PC-9 (cell line): ENCODE measurements at regions of chr12 and their contacts with region 1.

Region 1: GRCh38 chr12:104276273-104277131 is 27.0 kb upstream of the EID3 start:
- DNase-seq: peak in 1 of 2 experiments; percentile 90
- H3K4me3 ChIP-seq: peak overlapping the region; percentile 59; the same call in 1 of the 2 replicates
- H3K27ac ChIP-seq: peak overlapping the region; percentile 99
- H3K4me1 ChIP-seq: peaks cover 75% of the 10 kb centered on the region
- H3K27me3 ChIP-seq: no peaks in the 10 kb centered on the region
- CTCF ChIP-seq: no peak

Region 2: GRCh38 chr12:104243551-104243950 is 33.0 kb before region 1 on chr12:
- CTCF ChIA-PET with region 1: no interaction called
- POLR2A ChIA-PET with region 1: interaction called, 13 read pairs
- intact Hi-C with region 1: no loop called
- DNase-seq: no peak
- H3K4me3 ChIP-seq: no peak overlapping the region
- H3K27ac ChIP-seq: no peak overlapping the region
- H3K4me1 ChIP-seq: no peaks in the 10 kb centered on the region
- H3K27me3 ChIP-seq: no peaks in the 10 kb centered on the region
- CTCF ChIP-seq: no peak

Region 3: GRCh38 chr12:104263580-104264358 is 12.7 kb before region 1 on chr12:
- CTCF ChIA-PET with region 1: no interaction called
- POLR2A ChIA-PET with region 1: interaction called, 14 read pairs
- intact Hi-C with region 1: no loop called
- DNase-seq: no peak
- H3K4me3 ChIP-seq: no peak overlapping the region
- H3K27ac ChIP-seq: peak overlapping the region; percentile 23
- H3K4me1 ChIP-seq: peaks cover 13% of the 10 kb centered on the region
- H3K27me3 ChIP-seq: no peaks in the 10 kb centered on the region
- CTCF ChIP-seq: no peak

Region 4: GRCh38 chr12:104291867-104292524 is 15.5 kb after region 1 on chr12:
- CTCF ChIA-PET with region 1: interaction called, 7 read pairs
- POLR2A ChIA-PET with region 1: interaction called, 41 read pairs
- intact Hi-C with region 1: no loop called
- DNase-seq: peak in 1 of 2 experiments; percentile 33
- H3K4me3 ChIP-seq: peak overlapping the region; percentile 96
- H3K27ac ChIP-seq: peak overlapping the region; percentile 99
- H3K4me1 ChIP-seq: peaks cover 26% of the 10 kb centered on the region
- H3K27me3 ChIP-seq: no peaks in the 10 kb centered on the region
- CTCF ChIP-seq: no peak

Region 5: DNA sequence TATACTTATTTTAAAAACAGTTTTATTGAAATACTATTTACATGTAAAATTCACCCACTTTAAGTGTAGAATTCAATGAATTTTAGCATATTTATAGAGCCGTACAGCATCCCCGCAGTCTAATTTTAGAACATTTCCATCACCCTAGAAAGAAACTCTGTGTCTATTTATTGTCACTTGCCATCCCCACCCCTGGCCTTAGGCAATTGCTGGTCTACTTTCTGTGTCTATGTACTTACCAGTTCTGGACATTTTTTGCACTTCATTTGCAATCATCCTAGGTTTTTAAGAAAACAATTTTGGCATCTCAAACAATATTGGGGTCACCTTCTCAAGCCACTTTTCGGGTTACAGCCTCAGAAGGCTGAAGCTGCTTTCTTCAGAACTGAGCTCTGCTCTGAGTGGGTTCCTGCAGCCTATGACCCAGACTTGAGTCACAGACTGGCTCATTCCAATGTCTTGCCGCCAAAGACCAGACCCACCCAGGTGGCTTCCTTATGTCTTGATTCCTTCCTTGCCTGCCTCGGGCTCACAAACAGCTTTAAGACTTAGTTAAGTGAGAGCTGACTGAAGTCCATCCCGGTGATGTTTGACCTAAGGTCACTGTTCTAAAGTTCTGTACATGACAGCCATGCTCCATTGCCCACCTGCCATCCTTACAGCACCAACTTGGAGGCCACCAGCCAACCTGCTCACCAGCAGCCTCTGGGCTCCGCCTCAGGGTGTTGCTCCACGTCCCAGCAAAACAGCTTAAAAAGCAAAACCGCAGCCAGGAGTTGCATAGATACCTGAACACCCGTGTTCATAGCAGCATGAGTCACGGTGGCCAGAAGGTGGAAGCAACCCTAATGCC is 311.8 kb after region 1 on chr12:
- CTCF ChIA-PET with region 1: no interaction called
- POLR2A ChIA-PET with region 1: interaction called, 21 read pairs
- intact Hi-C with region 1: no loop called
- DNase-seq: peak; percentile 90 to 98
- H3K4me3 ChIP-seq: peak overlapping the region; percentile 41
- H3K27ac ChIP-seq: peak overlapping the region; percentile 91
- H3K4me1 ChIP-seq: peaks cover 71% of the 10 kb centered on the region
- H3K27me3 ChIP-seq: no peaks in the 10 kb centered on the region
- CTCF ChIP-seq: no peak